ENCODE measurements at regions of chr2 and their contacts with region 1.

Region 1: DNA sequence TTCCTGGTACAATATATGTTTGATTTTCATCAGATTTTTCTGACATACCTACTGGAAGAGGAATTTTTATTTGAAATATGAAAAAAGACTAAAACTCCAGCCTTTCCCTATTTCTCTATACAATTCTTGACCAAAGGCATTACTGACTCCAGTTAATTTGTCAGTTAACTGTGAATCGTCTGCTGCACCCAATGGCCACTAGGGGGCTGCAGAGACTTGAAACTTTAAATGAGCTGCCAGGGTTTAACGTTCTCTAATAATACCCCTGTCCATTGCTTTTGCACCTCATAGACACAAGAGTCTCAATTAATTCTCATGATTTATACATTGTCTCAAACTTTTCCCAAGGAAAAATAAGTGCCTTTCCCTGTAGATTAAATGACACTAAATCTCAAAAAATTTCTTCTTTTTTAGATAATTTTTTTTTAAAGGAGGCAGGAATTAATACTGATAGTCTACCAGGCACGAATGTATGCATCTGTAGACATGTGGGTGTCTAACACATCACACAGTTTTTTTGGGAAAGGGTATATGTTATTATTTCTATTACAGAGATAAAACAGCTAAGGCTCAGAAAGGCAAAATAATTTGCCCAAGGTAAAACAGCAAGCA is 1.8 kb upstream of the ALK start:
- DNase-seq: peak; percentile 81
- H3K4me3 Mint-ChIP-seq: no peak overlapping the region
- H3K27ac Mint-ChIP-seq: no peak overlapping the region
- H3K4me1 Mint-ChIP-seq: no peaks in the 10 kb centered on the region
- H3K27me3 Mint-ChIP-seq: peaks cover 41% of the 10 kb centered on the region

Region 2: DNA sequence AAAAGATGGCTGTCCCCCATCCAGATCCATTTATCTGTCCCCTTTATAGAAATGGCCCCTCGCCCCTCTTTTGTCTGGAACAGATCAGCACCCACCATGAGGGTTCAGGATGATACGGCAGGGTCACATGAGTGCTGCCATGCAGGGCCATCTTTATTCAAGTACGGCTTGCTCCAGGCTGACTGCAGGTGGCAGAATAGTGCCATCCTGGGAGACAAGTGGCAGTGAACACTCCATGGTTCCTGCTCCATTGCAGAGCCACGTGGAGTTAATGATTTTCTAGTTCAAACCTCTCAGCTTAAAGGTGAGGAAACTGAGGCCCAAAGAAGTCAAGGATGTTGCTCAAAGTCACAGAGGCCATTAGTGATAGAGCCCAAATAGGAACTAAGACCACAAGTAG is 627.4 kb before region 1 on chr2:
- intact Hi-C with region 1: loop called (anchors 10 kb)
- DNase-seq: no peak
- H3K4me3 Mint-ChIP-seq: no peak overlapping the region
- H3K27ac Mint-ChIP-seq: no peak overlapping the region
- H3K4me1 Mint-ChIP-seq: no peaks in the 10 kb centered on the region
- H3K27me3 Mint-ChIP-seq: peaks cover 28% of the 10 kb centered on the region

Region 3: DNA sequence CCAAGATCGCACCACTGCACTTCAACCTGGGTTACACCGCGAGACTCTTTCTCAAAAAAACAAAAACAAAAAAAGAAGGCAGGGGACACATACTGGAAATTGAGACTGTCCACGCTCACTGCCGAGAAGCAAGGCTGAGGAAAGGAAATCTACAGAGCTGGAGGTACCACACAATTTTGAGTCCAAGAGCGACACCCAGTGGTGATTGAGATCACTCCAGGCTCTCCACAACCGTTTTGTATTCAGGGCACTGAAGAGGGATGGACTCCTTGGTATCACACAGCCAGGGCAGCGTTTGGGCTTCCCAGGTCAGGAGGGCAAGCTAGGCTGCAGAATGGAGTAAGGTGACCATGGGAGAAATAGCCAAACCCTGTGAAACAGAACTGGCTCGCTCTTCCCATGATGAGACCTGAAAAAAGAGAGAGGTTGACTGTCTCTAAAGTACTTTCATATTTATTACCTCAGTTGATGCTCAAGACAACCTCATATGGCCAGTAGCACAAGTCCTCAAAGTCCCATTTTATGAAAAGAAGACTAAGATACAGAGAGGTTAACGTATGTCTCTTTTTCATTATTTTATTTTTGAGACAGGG is 149.1 kb after region 1 on chr2:
- intact Hi-C with region 1: loop called (anchors 1 kb)
- DNase-seq: peak; percentile 89
- H3K4me3 Mint-ChIP-seq: no peak overlapping the region
- H3K27ac Mint-ChIP-seq: no peak overlapping the region
- H3K4me1 Mint-ChIP-seq: no peaks in the 10 kb centered on the region
- H3K27me3 Mint-ChIP-seq: peaks cover 17% of the 10 kb centered on the region

Measured in activated CD4-positive, alpha-beta T cell treated with anti-CD3 and anti-CD28 coated beads, Interleukin-2, amount 10 ng/mL, durations not matched to agents 24 days and 14 days (primary cell).